Activated naive CD4-positive, alpha-beta T cell treated with anti-CD3 and anti-CD28 coated beads for 36 hours (primary cell): ENCODE measurements at regions of chr17 and their contacts with region 1.

Region 1: GRCh38 chr17:7214300-7215135 is 5.1 kb downstream of the DLG4 start:
- DNase-seq: peak; percentile 100
- H3K4me3 Mint-ChIP-seq: peak overlapping the region; percentile 88
- H3K27ac Mint-ChIP-seq: peak overlapping the region; percentile 92
- H3K4me1 Mint-ChIP-seq: peaks cover 52% of the 10 kb centered on the region
- H3K27me3 Mint-ChIP-seq: no peaks in the 10 kb centered on the region

Region 2: GRCh38 chr17:7234083-7234951 is 19.8 kb after region 1 on chr17 and contains the start of gene DVL2:
- CTCF ChIA-PET with region 1: interaction called, 15 read pairs
- intact Hi-C with region 1: loop called (anchors 1 kb)
- DNase-seq: peak; percentile 96
- H3K4me3 Mint-ChIP-seq: peak within 1 kb of the TSS; percentile 90
- H3K27ac Mint-ChIP-seq: peak within 1 kb of the TSS; percentile 88
- H3K4me1 Mint-ChIP-seq: peaks cover 52% of the 10 kb centered on the region
- H3K27me3 Mint-ChIP-seq: no peaks in the 10 kb centered on the region
- total RNA-seq, gene DVL2: 26.7 to 29.4 TPM

Region 3: GRCh38 chr17:7239091-7240027 is 24.8 kb after region 1 on chr17 and contains the start of gene PHF23:
- CTCF ChIA-PET with region 1: interaction called, 16 read pairs
- intact Hi-C with region 1: loop called (anchors 1 kb)
- DNase-seq: peak; percentile 99
- H3K4me3 Mint-ChIP-seq: peak within 1 kb of the TSS; percentile 94
- H3K27ac Mint-ChIP-seq: peak within 1 kb of the TSS; percentile 98
- H3K4me1 Mint-ChIP-seq: peaks cover 64% of the 10 kb centered on the region
- H3K27me3 Mint-ChIP-seq: no peaks in the 10 kb centered on the region
- total RNA-seq, gene PHF23: 8.4 to 10.0 TPM

Region 4: DNA sequence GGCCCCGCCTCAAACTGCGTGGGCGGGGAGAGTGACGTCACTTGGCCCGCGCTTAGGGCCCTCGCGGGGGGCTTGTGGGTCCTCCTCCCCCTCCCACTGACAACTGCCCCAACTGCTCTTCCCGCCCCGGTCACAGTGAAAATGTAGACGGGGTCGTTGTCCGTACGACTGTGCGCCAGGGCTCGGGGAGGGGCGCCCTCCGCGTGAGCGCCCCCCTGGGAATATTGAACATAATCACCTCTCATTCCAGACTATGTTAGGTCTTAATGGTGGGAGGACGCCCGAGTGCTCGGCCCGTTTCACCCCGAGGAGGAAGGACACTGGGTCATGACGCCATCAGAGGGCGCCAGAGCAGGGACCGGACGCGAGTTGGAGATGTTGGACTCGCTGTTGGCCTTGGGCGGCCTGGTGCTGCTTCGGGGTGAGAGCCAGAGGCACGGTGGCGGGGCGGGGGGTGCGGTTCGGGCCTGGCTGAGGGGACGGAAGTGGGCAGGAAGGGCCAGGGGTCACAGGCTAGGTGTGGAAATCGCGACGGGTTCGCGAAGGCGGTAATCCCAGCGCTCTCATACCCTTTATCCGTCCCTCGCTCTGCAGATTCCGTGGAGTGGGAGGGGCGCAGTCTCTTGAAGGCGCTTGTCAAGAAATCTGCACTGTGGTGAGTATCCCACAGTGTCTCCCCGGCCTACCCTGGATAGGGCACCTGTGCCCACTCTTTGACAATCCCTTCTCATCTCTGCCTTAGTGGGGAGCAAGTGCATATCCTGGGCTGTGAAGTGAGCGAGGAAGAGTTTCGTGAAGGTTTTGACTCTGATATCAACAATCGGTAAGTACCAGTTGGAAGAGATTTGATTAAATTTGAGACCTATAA is 37.9 kb after region 1 on chr17 and contains the start of gene ELP5:
- CTCF ChIA-PET with region 1: interaction called, 4 read pairs
- intact Hi-C with region 1: loop called (anchors 1 kb)
- DNase-seq: peak; percentile 93
- H3K4me3 Mint-ChIP-seq: peak within 1 kb of the TSS; percentile 86
- H3K27ac Mint-ChIP-seq: peak within 1 kb of the TSS; percentile 99
- H3K4me1 Mint-ChIP-seq: peaks cover 34% of the 10 kb centered on the region
- H3K27me3 Mint-ChIP-seq: no peaks in the 10 kb centered on the region
- total RNA-seq, gene ELP5: 52.4 to 53.5 TPM

Region 5: DNA sequence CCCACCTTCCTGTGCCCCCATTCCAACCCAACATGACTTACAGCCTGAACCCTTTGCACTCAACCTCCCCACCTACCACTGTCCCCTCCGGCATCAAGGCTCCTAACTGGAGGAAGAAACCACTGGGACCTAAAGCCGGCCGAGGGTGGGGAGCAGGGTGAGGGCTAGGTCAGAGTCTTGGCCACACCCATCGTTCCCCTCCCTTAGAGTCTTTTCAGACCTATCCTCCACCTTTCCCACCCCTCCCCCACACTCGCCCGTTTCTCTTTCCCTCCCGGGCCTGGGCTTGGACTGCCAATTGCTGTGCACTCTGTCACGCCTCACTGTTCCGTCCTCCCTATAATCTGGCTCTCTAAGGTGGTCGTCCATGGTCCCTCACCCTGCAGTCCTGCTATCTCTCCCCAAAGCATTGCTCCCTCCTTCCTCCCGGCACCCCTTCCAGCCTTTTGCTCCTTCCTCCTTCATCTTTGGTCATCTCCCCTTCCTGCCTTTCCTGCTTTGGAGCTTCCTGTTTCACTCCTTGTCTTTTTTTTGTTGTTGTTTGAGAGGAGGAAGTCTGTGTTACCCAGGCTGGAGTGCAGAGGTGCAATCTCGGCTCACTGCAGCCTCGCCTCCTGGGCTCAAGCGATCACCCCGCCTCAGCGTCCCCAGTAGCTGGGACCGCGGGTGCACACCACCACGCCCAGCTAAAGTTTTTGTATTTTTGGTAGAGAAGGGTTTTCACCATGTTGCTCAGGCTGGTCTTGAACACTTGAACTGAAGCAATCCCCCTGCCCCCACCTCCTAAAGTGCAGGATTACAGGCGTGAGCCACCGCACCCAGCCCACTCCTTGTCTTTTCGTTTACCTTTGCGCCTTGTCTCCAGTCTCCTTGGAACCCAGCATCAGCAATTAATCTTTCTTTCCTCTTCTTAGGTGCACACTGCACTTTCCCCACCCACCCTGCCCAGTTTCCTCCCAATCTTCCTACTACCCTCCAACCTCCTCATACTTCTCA is 48.9 kb after region 1 on chr17:
- CTCF ChIA-PET with region 1: no interaction called
- intact Hi-C with region 1: no loop called
- DNase-seq: peak; percentile 37
- H3K4me3 Mint-ChIP-seq: peak overlapping the region; percentile 55
- H3K27ac Mint-ChIP-seq: no peak overlapping the region
- H3K4me1 Mint-ChIP-seq: peaks cover 25% of the 10 kb centered on the region
- H3K27me3 Mint-ChIP-seq: peaks cover 21% of the 10 kb centered on the region

Region 6: GRCh38 chr17:7289256-7290032 is 74.9 kb after region 1 on chr17:
- CTCF ChIA-PET with region 1: no interaction called
- intact Hi-C with region 1: no loop called
- DNase-seq: no peak
- H3K4me3 Mint-ChIP-seq: no peak overlapping the region
- H3K27ac Mint-ChIP-seq: no peak overlapping the region
- H3K4me1 Mint-ChIP-seq: peaks cover 3% of the 10 kb centered on the region
- H3K27me3 Mint-ChIP-seq: peaks cover 9% of the 10 kb centered on the region

Region 7: GRCh38 chr17:7329374-7329996 is 115.0 kb after region 1 on chr17:
- CTCF ChIA-PET with region 1: no interaction called
- intact Hi-C with region 1: loop called (anchors 1 kb)
- DNase-seq: peak; percentile 98
- H3K4me3 Mint-ChIP-seq: peak overlapping the region; percentile 97
- H3K27ac Mint-ChIP-seq: peak overlapping the region; percentile 91
- H3K4me1 Mint-ChIP-seq: peaks cover 54% of the 10 kb centered on the region
- H3K27me3 Mint-ChIP-seq: no peaks in the 10 kb centered on the region

Region 8: DNA sequence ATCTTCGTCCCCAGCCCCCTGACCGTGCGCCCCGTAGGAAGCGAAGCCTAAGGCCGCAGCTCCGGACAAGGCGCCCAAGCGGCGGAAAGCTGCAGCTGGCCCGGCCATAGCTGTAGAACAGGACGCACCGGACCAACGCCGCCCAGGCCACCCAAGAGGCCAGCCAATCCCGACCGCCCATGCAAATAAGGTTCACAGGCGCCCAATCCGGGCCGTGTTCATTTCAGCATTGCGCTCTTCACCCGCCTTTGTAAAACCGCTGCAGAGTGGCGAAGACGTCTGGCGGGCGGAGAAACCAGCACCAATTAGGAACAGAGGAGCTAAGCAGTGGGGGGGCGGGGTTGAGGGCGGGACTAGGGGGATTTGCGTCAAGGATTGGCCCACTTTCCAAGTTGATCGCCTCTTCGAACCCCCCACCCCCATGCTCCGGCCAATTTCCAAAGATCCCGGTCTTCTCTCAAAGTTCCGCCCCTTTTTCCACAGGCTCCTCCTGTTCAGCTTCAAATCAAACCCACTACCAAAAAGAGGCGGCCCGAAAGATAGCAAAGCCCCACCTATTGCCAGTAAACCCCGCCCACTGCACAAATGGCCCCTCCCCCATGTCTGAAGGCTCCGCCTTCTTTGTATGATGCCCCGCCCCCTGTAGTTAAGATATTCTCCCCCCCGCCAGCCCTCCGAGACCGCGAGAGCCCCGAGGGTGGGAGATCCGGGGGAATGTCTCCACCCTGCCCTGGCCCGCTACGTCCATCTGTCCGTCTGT is 189.6 kb after region 1 on chr17 and contains the start of gene TMEM256:
- CTCF ChIA-PET with region 1: no interaction called
- intact Hi-C with region 1: loop called (anchors 5 kb)
- DNase-seq: peak; percentile 99
- H3K4me3 Mint-ChIP-seq: peak within 1 kb of the TSS; percentile 93
- H3K27ac Mint-ChIP-seq: peak within 1 kb of the TSS; percentile 93
- H3K4me1 Mint-ChIP-seq: peaks cover 19% of the 10 kb centered on the region
- H3K27me3 Mint-ChIP-seq: peaks cover 2% of the 10 kb centered on the region
- total RNA-seq, gene TMEM256: 65.6 to 66.3 TPM